Activated CD4-positive, alpha-beta memory T cell treated with anti-CD3 and anti-CD28 coated beads, Interleukin-2, amount 10 ng/mL, durations not matched to agents 7 days and 5 days (primary cell): ENCODE measurements at regions of chr14 and their contacts with region 1.

Region 1: GRCh38 chr14:73713803-73714655 is at the start of gene PNMA1:
- DNase-seq: peak; percentile 88
- H3K4me3 Mint-ChIP-seq: peak within 1 kb of the TSS; percentile 91
- H3K27ac Mint-ChIP-seq: peak within 1 kb of the TSS; percentile 88
- H3K4me1 Mint-ChIP-seq: peaks cover 22% of the 10 kb centered on the region
- H3K27me3 Mint-ChIP-seq: no peaks in the 10 kb centered on the region
- total RNA-seq, gene PNMA1: 28.2 to 30.0 TPM

Region 2: DNA sequence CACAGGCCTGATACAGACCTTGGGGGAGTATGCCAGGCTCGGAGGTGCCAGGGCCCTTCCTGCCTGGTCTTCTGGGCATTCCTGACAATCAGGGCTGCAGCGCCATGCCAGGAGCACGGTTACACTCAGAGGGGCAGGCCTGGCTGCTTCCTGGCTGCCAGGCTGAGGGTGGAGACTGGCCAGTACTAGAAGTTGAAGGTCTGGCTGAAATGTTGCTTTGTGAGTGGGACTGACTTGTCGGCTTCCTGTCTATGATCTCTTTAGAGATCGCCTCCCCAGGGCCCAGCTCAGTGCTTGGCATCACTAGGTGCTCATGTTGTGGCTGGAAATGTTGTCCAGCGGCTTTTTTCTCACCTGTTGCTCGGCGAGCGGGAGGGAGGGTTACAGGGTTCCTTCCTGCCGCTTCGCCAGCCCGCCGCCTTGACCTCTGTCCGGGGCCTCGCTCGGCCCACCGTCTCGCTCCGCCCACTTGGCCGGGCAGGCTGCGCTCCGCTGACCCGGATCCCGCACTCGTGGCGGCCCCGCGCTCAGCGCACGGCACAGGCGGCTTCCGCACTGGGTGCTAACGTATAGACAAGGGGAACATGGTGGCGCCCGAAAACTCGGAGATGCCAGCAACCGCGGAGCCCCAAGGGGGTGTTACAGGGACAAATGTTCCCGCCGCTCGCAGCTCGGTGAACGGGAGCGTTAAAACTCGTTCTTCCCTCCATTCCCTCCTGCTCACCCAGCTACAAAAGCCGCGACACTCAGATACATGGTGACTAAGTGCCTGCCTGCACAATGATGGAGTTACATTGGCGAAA is 444.1 kb before region 1 on chr14:
- CTCF ChIA-PET with region 1: no interaction called
- POLR2A ChIA-PET with region 1: no interaction called
- DNase-seq: no peak
- H3K4me3 Mint-ChIP-seq: peak overlapping the region; percentile 11
- H3K27ac Mint-ChIP-seq: no peak overlapping the region
- H3K4me1 Mint-ChIP-seq: peaks cover 6% of the 10 kb centered on the region
- H3K27me3 Mint-ChIP-seq: peaks cover 11% of the 10 kb centered on the region

Region 3: DNA sequence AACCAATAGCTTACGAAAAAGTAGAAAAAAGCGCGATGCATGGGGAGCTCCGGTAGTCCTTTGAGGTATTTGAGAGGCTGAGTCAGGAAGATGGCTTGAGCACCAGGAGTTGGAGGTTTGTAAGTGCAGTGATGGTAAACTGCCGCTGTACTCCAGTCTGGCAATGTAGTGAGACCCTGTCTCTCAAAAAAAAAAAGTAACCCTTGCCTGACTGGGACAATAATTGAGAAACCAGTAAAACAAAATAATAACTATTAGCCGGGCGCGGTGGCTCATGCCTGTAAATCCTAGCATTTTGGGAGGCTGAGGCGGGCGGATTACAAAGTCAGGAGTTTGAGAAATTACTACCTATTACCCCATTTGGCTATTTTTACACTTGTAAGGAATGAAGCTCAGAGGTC is 145.6 kb before region 1 on chr14:
- CTCF ChIA-PET with region 1: interaction called, 3 read pairs
- POLR2A ChIA-PET with region 1: interaction called, 15 read pairs
- DNase-seq: no peak
- H3K4me3 Mint-ChIP-seq: peak overlapping the region; percentile 85
- H3K27ac Mint-ChIP-seq: peak overlapping the region; percentile 91
- H3K4me1 Mint-ChIP-seq: peaks cover 41% of the 10 kb centered on the region
- H3K27me3 Mint-ChIP-seq: no peaks in the 10 kb centered on the region

Region 4: DNA sequence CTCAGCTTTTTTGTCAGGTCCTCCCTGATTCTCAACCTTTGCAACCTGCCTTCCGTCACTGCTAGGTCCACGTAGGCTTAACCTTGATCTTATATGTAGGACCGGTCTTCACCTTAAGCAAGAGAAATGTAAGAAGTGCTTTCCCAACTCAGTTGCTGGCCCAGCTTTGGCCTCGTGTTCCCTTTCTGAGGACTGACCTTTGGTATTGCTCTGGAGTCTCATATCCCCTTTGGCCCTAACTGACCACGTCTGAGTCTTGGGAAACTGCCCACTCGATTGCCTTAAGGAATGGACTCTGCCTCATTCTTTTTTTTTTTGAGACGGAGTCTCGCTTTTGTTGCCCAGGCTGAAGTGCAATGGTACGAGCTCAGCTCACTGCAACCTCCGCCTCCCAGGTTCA is 93.8 kb before region 1 on chr14:
- CTCF ChIA-PET with region 1: no interaction called
- POLR2A ChIA-PET with region 1: no interaction called
- DNase-seq: no peak
- H3K4me3 Mint-ChIP-seq: no peak overlapping the region
- H3K27ac Mint-ChIP-seq: no peak overlapping the region
- H3K4me1 Mint-ChIP-seq: no peaks in the 10 kb centered on the region
- H3K27me3 Mint-ChIP-seq: no peaks in the 10 kb centered on the region

Region 5: GRCh38 chr14:73728717-73729330 is 14.8 kb after region 1 on chr14:
- CTCF ChIA-PET with region 1: interaction called, 11 read pairs
- POLR2A ChIA-PET with region 1: interaction called, 20 read pairs
- DNase-seq: peak; percentile 88
- H3K4me3 Mint-ChIP-seq: no peak overlapping the region
- H3K27ac Mint-ChIP-seq: peak overlapping the region; percentile 62
- H3K4me1 Mint-ChIP-seq: peaks cover 43% of the 10 kb centered on the region
- H3K27me3 Mint-ChIP-seq: no peaks in the 10 kb centered on the region

Region 6: GRCh38 chr14:73753959-73754882 is 40.2 kb after region 1 on chr14:
- CTCF ChIA-PET with region 1: interaction called, 7 read pairs
- POLR2A ChIA-PET with region 1: interaction called, 20 read pairs
- DNase-seq: peak; percentile 67
- H3K4me3 Mint-ChIP-seq: peak overlapping the region; percentile 86
- H3K27ac Mint-ChIP-seq: peak overlapping the region; percentile 82
- H3K4me1 Mint-ChIP-seq: peaks cover 95% of the 10 kb centered on the region
- H3K27me3 Mint-ChIP-seq: no peaks in the 10 kb centered on the region

Region 7: GRCh38 chr14:73886449-73887317 is 172.7 kb after region 1 on chr14 and contains the start of gene ZNF410:
- CTCF ChIA-PET with region 1: no interaction called
- POLR2A ChIA-PET with region 1: interaction called, 29 read pairs
- DNase-seq: peak; percentile 88
- H3K4me3 Mint-ChIP-seq: peak within 1 kb of the TSS; percentile 96
- H3K27ac Mint-ChIP-seq: peak within 1 kb of the TSS; percentile 94
- H3K4me1 Mint-ChIP-seq: peaks cover 51% of the 10 kb centered on the region
- H3K27me3 Mint-ChIP-seq: no peaks in the 10 kb centered on the region
- total RNA-seq, gene ZNF410: 54.2 to 56.5 TPM